Activated CD8-positive, alpha-beta memory T cell treated with anti-CD3 and anti-CD28 coated beads, Interleukin-2, amount 10 ng/mL, durations not matched to agents 7 days and 5 days (primary cell): ENCODE measurements at regions of chr4 and their contacts with region 1.

Region 1: DNA sequence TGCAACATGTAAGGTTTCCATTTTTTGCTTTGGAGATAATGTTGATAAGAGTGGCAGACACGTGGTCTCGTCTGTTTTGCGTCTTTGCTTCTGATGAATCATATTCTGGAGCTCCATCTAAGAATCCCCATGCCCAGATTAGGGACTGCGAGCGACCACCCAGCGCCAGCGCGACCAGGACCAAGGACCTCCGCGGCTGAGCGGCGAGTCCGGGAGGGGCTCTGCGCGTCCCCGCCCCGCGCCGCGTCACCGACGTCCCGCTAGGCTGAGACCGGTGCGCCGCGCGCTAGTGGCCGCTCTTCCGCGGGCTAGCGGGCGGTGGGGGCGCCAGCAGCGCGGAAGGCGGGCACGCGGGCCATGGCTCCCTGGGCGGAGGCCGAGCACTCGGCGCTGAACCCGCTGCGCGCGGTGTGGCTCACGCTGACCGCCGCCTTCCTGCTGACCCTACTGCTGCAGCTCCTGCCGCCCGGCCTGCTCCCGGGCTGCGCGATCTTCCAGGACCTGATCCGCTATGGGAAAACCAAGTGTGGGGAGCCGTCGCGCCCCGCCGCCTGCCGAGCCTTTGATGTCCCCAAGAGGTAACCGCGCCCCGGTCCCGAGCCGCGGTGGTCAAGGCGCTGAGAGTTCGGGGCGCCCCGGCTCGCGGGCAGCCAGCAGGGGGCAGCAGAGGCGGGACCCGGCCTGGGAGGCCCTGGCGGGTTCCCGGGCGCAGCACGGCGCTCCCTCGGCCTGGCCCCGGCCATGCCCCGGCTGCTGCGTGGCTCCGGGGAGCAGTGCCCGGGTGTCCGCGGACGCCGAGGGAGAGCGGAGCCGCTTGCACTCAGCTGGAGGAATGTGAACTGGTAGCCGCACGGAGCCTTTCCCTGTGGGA is at the start of gene SRD5A3:
- DNase-seq: peak; percentile 84
- ATAC-seq: peak; percentile 93
- H3K4me3 Mint-ChIP-seq: peak within 1 kb of the TSS; percentile 81
- H3K27ac Mint-ChIP-seq: peak within 1 kb of the TSS; percentile 88
- H3K4me1 Mint-ChIP-seq: peaks cover 21% of the 10 kb centered on the region
- H3K27me3 Mint-ChIP-seq: peaks cover 1% of the 10 kb centered on the region
- total RNA-seq, gene SRD5A3: 8.8 to 9.7 TPM

Region 2: GRCh38 chr4:55395529-55396307 is 49.5 kb after region 1 on chr4 and contains the start of gene TMEM165:
- CTCF ChIA-PET with region 1: interaction called, 41 read pairs
- DNase-seq: peak; percentile 95
- ATAC-seq: peak; percentile 96
- H3K4me3 Mint-ChIP-seq: peak within 1 kb of the TSS; percentile 94
- H3K27ac Mint-ChIP-seq: peak within 1 kb of the TSS; percentile 93
- H3K4me1 Mint-ChIP-seq: peaks cover 36% of the 10 kb centered on the region
- H3K27me3 Mint-ChIP-seq: no peaks in the 10 kb centered on the region
- total RNA-seq, gene TMEM165: 77.2 to 82.2 TPM

Region 3: GRCh38 chr4:55546756-55547465 is 200.7 kb after region 1 on chr4 and contains the start of gene CLOCK:
- CTCF ChIA-PET with region 1: interaction called, 11 read pairs
- DNase-seq: peak; percentile 86
- ATAC-seq: peak; percentile 80
- H3K4me3 Mint-ChIP-seq: peak within 1 kb of the TSS; percentile 84
- H3K27ac Mint-ChIP-seq: peak within 1 kb of the TSS; percentile 81
- H3K4me1 Mint-ChIP-seq: peaks cover 51% of the 10 kb centered on the region
- H3K27me3 Mint-ChIP-seq: peaks cover 31% of the 10 kb centered on the region
- total RNA-seq, gene CLOCK: 9.4 to 10.0 TPM

Region 4: DNA sequence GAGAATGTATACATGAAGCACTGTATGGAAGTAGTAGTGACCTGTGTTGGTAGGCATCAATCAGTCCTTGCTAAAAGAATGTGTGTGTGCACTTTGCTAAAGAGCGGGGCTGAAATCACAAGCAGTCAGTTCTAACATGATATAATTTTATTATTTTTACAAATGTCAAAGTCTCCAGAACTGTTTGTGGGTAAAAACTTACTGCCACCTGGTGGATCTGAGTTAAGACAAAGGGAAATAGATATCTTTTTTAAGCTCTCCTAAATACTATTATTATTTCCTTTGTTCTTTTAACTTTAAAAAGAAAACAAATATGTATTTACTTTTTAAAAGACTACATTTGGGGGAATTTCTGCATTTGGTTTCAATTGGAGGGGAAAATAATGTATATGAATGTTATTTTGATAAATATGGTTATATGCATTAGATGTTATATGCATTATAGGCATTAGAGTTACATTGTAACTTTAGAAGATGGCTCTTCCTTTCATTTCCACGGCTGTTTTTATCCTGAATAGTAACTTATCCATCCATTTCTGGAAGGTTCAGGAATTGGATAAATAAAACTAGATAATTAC is 208.3 kb after region 1 on chr4:
- CTCF ChIA-PET with region 1: interaction called, 11 read pairs
- DNase-seq: no peak
- ATAC-seq: no peak
- H3K4me3 Mint-ChIP-seq: no peak overlapping the region
- H3K27ac Mint-ChIP-seq: no peak overlapping the region
- H3K4me1 Mint-ChIP-seq: peaks cover 30% of the 10 kb centered on the region
- H3K27me3 Mint-ChIP-seq: peaks cover 42% of the 10 kb centered on the region